AG04450 (cell line): ENCODE measurements at regions of chr12 and their contacts with region 1.

Region 1: DNA sequence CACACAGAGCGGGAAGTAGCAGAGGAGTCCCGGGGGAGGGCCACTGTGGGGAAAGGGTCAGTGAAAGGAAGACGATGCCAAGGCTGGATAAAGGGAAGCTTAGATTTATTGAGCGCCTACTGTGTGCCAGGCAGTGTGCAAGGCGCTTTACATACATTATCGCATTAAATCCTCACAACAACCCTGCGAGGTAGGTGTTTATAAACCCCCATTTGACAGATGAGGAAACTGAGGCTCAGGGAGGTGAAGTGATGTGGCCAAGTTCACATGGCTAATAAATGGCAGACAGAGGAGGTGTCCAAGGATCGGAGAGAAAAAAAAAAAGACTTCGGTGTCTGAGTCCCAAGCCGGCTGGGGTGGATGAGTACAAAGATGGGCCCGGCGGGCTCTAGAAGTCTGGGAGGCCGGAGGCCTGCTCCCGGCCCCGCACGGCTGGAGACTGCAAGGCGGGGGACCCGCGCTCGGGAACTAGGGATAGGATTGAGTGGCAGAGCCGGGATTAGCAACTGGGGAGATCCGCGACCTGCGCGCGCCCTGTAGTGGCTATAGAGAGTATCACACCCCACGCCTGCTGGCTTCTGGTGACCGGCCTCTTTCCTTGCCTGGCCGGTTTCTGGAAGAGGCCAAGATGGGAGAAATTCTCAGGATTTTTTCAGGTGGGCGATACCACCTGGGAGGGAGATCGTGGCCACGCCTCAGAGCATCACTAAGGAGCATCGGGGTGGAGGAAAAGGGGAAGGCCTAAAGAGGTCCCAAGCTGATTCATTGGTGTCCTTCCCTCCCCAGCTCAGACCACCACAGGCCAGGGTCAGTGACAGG is 3.9 kb downstream of the DDN start:
- DNase-seq: peak; percentile 49
- H3K4me3 ChIP-seq: peak overlapping the region; percentile 22; the same call in 1 of the 2 replicates
- H3K27ac ChIP-seq: no peak overlapping the region
- H3K27me3 ChIP-seq: peaks cover 31% of the 10 kb centered on the region
- CTCF ChIP-seq: peak; percentile 80

Region 2: DNA sequence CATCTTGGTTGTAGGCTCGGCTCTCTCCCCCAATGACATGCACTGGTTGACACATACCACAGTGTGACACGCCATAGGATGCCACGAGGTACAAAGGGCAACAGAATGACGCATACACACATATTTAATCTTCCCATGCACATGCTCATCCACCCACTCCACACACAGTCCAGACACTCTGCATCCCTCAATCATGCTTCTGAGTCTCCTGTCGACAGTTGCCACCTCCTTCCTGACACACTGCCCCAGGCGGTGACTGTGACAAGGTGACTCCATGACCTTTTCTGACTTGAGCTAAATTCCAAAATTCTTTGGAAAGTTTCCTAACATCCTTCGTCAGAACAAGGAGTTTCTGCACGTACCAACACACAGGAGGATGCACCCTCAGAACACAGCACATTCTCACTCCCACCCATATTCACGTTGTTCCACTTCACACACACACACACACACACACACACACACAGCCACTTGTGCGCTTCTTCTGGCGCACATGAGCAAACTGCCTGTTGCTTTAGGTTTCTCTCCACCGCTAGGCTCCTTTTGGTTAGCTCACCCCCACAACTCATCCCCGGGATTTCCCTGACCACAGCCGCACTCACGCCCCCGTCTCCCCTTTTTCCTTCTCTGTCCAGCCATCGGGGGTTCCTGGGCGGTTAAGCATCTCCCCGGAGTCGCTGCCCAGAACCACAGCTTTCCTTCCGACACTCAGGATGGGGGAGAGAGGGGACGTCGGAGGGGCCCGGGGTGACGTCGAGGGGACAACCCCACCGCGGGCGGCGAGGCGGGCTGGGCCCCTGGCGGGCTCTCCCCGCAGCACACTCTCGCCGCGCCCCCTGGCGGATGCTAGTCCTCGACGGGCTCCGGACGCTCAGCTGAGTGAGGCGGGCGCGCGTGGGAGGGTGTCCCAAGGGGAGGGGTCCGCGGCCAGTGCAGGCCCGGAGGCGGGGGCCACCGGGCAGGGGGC is 17.7 kb before region 1 on chr12:
- CTCF ChIA-PET with region 1: interaction called, 95 read pairs
- POLR2A ChIA-PET with region 1: interaction called, 5 read pairs
- DNase-seq: no peak
- H3K4me3 ChIP-seq: no peak overlapping the region
- H3K27ac ChIP-seq: no peak overlapping the region
- H3K27me3 ChIP-seq: peaks cover 64% of the 10 kb centered on the region
- CTCF ChIP-seq: peak; percentile 63

Region 3: DNA sequence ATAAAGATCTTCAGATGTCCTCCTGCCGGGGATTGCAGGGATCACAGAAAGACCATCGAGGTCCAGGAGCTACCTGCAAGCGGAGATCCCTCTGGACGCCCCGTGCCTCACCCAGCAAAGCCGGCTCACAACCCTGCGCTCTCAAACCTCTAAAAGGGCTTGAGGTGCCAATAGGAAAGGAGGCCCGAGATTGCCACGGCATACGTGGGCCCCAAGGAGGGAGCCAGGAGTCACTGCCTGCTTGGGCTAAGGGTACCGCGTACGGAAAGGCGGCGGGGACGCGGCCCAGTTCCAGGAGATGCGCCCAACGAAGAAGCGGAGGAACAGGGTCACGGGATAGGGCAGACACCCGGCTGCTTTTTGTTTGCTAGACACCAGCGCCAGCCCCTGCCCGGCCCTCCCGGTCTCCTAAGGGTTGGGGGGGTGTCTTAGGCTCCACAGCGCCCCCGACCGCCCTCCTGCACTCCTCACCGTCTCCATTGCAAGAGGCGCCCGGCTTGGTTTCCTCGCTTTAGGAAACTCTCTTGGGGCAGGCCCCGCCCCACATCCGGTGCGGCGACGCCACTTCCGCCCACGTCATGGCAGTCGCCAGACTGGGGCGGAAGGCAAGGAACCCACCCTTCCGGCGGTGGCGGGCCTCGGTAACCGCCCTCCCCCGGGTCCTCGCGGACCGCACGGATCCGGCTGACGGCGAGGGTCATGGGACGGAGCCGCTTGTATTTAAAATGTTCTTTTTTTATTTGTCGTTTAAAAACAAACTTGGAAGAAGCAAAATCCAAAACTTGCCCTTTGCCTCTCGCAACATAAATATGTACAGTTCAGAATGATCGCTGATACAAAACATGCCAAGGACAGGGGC is 23.2 kb after region 1 on chr12 and contains the start of gene PRKAG1:
- CTCF ChIA-PET with region 1: interaction called, 34 read pairs
- POLR2A ChIA-PET with region 1: interaction called, 4 read pairs
- DNase-seq: peak; percentile 92
- H3K4me3 ChIP-seq: peak within 1 kb of the TSS; percentile 94
- H3K27ac ChIP-seq: peak within 1 kb of the TSS; percentile 98
- H3K27me3 ChIP-seq: no peaks in the 10 kb centered on the region
- CTCF ChIP-seq: peak; percentile 63
- polyA plus RNA-seq, gene PRKAG1: 112 and 130 TPM in 2 replicates

Region 4: GRCh38 chr12:49098035-49098451 is 102.8 kb after region 1 on chr12:
- CTCF ChIA-PET with region 1: no interaction called
- POLR2A ChIA-PET with region 1: no interaction called
- DNase-seq: no peak
- H3K4me3 ChIP-seq: no peak overlapping the region
- H3K27ac ChIP-seq: no peak overlapping the region
- H3K27me3 ChIP-seq: peaks cover 5% of the 10 kb centered on the region
- CTCF ChIP-seq: peak; percentile 81